Aorta (tissue), 5 donors: ENCODE measurements at regions of chr9 and their contacts with region 1.

Region 1: GRCh38 chr9:27726244-27727081 is 153.2 kb upstream of the C9orf72 start:
- DNase-seq: peak in 1 of 2 donors; percentile 59
- ATAC-seq: peak; percentile 61
- H3K4me3 ChIP-seq: no peak overlapping the region
- H3K27ac ChIP-seq: no peak overlapping the region
- H3K4me1 ChIP-seq: no peaks in the 10 kb centered on the region
- H3K27me3 ChIP-seq: no peaks in the 10 kb centered on the region

Region 2: DNA sequence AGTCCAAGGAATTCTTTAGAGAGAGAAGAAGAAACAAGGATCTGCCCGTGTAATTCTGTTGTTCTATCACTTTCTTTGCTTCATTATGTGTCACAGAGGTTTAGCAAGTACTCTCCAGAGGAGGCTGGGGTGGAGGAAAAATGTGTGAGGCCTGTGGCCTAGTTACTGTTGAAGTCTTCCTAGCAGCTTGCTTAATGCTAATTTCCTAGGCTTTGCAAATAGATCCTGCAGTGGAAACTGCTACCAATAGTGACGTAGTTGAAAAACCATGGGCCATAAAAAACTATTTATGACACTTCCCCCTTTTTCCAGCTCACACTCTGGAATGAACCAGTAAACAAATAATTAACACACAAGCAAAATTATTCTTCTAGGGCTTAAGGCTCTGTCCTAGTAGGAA is 126.2 kb before region 1 on chr9:
- intact Hi-C with region 1: no loop called
- DNase-seq: no peak
- ATAC-seq: no peak
- H3K4me3 ChIP-seq: no peak overlapping the region
- H3K27ac ChIP-seq: no peak overlapping the region
- H3K4me1 ChIP-seq: no peaks in the 10 kb centered on the region
- H3K27me3 ChIP-seq: no peaks in the 10 kb centered on the region

Region 3: GRCh38 chr9:28073270-28073669 is 346.8 kb after region 1 on chr9:
- intact Hi-C with region 1: loop called in 1 of 2 experiments (anchors 10 kb)
- DNase-seq: no peak
- ATAC-seq: no peak
- H3K4me3 ChIP-seq: no peak overlapping the region
- H3K27ac ChIP-seq: no peak overlapping the region
- H3K4me1 ChIP-seq: no peaks in the 10 kb centered on the region
- H3K27me3 ChIP-seq: no peaks in the 10 kb centered on the region